ENCODE measurements at regions of chr2 and their contacts with region 1.

Region 1: DNA sequence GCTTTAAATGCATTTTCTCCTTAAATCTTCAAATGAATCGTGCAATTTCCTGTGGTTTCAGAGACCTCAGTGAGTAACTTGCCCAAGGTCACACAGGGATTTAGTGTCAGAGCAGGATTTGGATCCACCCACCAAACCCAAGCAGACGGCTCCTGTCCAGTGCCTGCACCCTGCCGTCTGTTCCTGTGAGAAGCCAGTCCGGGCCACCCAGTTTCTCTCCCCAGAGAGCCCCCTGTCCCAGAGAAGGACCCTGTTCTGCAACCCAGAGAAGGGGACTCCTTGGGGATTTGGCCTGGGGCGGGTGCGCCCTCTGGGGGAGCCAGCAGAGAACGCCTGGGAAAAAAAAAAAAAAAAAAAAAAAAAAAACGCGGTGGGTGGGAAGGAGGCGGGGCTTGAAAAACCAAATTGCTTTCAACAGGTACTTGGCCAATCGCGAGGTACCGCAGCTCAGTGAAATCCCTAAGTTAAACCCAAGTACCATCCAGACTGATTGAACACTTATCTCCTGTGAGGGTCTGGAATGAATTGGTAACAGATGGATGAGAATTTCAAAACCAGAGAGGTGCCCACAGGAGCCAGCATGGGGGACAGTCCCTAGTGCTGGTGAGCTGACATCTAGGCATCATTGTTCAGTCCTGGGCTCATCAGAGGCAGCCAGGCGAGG is 30.9 kb upstream of the REEP1 start:
- DNase-seq: peak; percentile 29 to 65 (median 48)
- H3K4me3 ChIP-seq: no peak overlapping the region
- H3K27ac ChIP-seq: no peak overlapping the region
- H3K4me1 ChIP-seq: peaks cover 4 to 8% of the 10 kb centered on the region in 2 donors
- H3K27me3 ChIP-seq: no peaks in the 10 kb centered on the region
- CTCF ChIP-seq: peak; percentile 39 to 70 (median 58)
- POLR2A ChIP-seq: no peak

Region 2: GRCh38 chr2:86221066-86221684 is 147.1 kb before region 1 on chr2:
- intact Hi-C with region 1: loop called (anchors 2 to 5 kb)
- DNase-seq: peak; percentile 42 to 83 (median 56)
- H3K4me3 ChIP-seq: no peak overlapping the region
- H3K27ac ChIP-seq: peak overlapping the region in 1 of 5 donors; percentile 18
- H3K4me1 ChIP-seq: peaks cover 9 to 19% of the 10 kb centered on the region in 2 donors
- H3K27me3 ChIP-seq: no peaks in the 10 kb centered on the region
- CTCF ChIP-seq: peak; percentile 65 to 95 (median 90)
- POLR2A ChIP-seq: no peak

Measured in adrenal gland (tissue), 19 donors.